ENCODE measurements at regions of chr19 and their contacts with region 1.

Region 1: GRCh38 chr19:46346821-46347571 is at the start of gene PPP5C:
- DNase-seq: peak; percentile 70 to 93 (median 84)
- H3K4me3 ChIP-seq: peak within 1 kb of the TSS; percentile 70 to 100 (median 96)
- H3K27ac ChIP-seq: peak within 1 kb of the TSS in 57 of 59 donors; percentile 30 to 95 (median 84)
- H3K27me3 ChIP-seq: no peaks in the 10 kb centered on the region
- CTCF ChIP-seq: peak in 51 of 56 donors; percentile 20 to 72 (median 48)
- total RNA-seq, gene PPP5C: 63.9 to 137 (median 98.8) TPM

Region 2: GRCh38 chr19:46299004-46299509 is 47.9 kb before region 1 on chr19:
- intact Hi-C with region 1: loop called in 1 of 2 experiments (anchors 5 kb)
- DNase-seq: peak; percentile 54 to 94 (median 90)
- H3K4me3 ChIP-seq: peak overlapping the region; percentile 6 to 66 (median 46)
- H3K27ac ChIP-seq: peak overlapping the region in 57 of 59 donors; percentile 16 to 96 (median 85)
- H3K27me3 ChIP-seq: peaks cover 0 to 14% (median 0%) of the 10 kb centered on the region in 45 donors
- CTCF ChIP-seq: peak in 5 of 56 donors; percentile 8 to 34 (median 16)

Region 3: GRCh38 chr19:46328079-46328478 is 18.9 kb before region 1 on chr19:
- intact Hi-C with region 1: no loop called
- DNase-seq: no peak
- H3K4me3 ChIP-seq: no peak overlapping the region
- H3K27ac ChIP-seq: no peak overlapping the region
- H3K27me3 ChIP-seq: no peaks in the 10 kb centered on the region
- CTCF ChIP-seq: no peak

Measured in dorsolateral prefrontal cortex (tissue), 120 donors.